Activated naive CD4-positive, alpha-beta T cell treated with anti-CD3 and anti-CD28 coated beads for 36 hours (primary cell): ENCODE measurements at regions of chr1 and their contacts with region 1.

Region 1: DNA sequence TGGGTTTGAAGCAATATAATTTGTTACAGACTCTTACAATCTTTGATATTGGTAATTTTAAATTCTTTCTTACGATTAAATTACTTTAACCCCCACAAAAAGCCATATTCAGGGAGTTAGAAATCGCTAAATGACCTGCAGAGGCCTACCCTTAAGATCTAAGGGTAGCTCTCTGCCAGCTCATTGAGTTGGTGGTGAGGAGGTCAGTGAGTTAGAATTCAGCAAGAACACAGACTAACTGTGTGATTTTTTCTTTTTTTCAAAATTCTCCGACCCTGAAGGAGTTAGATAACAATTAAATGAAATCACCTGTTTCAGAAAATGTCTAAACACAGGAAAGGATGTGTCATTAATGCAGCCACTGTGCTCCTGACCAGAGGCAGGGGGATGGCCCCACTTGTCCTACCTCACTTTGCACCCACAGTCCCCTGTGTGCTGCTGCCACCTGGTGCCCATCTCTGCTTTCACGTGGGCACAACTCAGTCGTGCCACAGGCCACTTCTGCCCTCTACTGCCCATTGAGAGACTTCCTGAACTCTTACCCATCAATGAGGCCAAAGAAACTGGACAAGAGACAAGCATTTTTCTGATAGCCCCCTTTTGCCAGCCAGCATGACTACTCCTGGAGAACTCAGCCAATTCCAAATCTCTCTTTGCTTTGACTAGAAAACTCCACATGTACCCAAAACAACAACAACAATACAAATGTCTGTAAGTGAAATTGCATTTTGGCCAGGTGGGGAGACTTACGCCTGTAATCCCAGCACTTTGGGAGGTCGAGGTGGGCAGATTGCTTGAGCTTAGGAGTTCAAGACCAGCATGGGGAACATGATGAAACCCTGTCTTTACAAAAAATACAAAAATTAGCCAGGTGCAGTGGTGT is 8.4 kb downstream of the CFAP45 start:
- DNase-seq: peak; percentile 87
- H3K4me3 Mint-ChIP-seq: no peak overlapping the region
- H3K27ac Mint-ChIP-seq: no peak overlapping the region
- H3K4me1 Mint-ChIP-seq: peaks cover 6% of the 10 kb centered on the region
- H3K27me3 Mint-ChIP-seq: no peaks in the 10 kb centered on the region

Region 2: DNA sequence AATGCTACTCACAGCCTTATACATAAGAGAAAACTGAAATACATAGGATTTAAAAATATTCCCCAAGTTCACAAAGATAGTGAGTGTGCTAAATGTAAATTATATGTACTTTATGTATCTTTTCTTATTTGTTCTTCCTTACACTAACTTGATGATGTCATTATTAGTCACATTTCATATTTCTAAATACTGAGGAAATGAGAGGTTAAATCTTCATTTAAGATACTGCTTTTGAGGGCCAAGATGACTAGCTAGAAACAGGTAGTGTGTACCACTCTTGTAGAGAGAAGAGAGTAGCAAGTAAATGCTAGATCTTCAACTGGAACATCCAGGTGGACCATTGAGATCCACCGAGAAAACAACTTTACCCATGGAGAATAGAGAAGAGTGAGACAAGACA is 930.3 kb before region 1 on chr1:
- CTCF ChIA-PET with region 1: no interaction called
- intact Hi-C with region 1: no loop called
- DNase-seq: no peak
- H3K4me3 Mint-ChIP-seq: no peak overlapping the region
- H3K27ac Mint-ChIP-seq: no peak overlapping the region
- H3K4me1 Mint-ChIP-seq: peaks cover 6% of the 10 kb centered on the region
- H3K27me3 Mint-ChIP-seq: peaks cover 3% of the 10 kb centered on the region

Region 3: GRCh38 chr1:159132271-159132881 is 759.1 kb before region 1 on chr1:
- CTCF ChIA-PET with region 1: no interaction called
- intact Hi-C with region 1: loop called (anchors 10 kb)
- DNase-seq: peak; percentile 84
- H3K4me3 Mint-ChIP-seq: no peak overlapping the region
- H3K27ac Mint-ChIP-seq: no peak overlapping the region
- H3K4me1 Mint-ChIP-seq: no peaks in the 10 kb centered on the region
- H3K27me3 Mint-ChIP-seq: peaks cover 6% of the 10 kb centered on the region

Region 4: GRCh38 chr1:159214149-159214760 is 677.3 kb before region 1 on chr1:
- CTCF ChIA-PET with region 1: interaction called, 11 read pairs
- intact Hi-C with region 1: loop called (anchors 2 kb)
- DNase-seq: peak; percentile 59
- H3K4me3 Mint-ChIP-seq: no peak overlapping the region
- H3K27ac Mint-ChIP-seq: no peak overlapping the region
- H3K4me1 Mint-ChIP-seq: peaks cover 2% of the 10 kb centered on the region
- H3K27me3 Mint-ChIP-seq: peaks cover 48% of the 10 kb centered on the region

Region 5: DNA sequence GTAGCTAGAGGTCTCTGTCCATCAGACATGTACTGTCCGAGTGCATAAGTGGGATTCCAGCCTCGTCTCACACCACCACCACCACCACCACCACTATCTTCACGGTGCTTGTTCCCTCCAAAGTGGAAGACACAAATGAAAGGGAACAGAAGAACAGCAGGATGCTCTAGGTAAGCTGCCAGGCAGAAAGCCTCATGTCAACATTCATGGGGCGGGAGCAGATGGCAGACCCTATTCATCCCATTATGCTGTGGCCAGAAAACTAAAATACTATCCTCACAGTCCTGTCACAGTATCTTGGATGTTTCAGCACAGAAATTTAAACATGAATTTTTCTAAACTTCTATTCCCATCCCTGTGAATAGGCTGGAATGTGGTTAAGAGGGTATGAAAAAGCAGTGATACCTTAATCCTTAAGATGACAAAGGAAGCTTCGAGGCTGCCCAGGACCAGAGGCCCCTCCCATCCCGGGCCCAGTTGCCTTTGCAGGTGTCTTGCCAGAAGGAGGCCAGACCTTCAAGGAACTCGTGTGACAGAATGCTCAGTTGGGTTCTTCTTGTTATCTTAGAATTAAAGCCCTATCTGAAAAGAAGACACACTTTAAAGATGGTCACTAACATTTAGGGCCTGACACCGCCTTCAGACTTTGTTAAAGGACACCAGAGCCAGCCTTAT is 279.2 kb before region 1 on chr1:
- CTCF ChIA-PET with region 1: no interaction called
- intact Hi-C with region 1: no loop called
- DNase-seq: no peak
- H3K4me3 Mint-ChIP-seq: no peak overlapping the region
- H3K27ac Mint-ChIP-seq: no peak overlapping the region
- H3K4me1 Mint-ChIP-seq: no peaks in the 10 kb centered on the region
- H3K27me3 Mint-ChIP-seq: peaks cover 17% of the 10 kb centered on the region

Region 6: GRCh38 chr1:159737238-159737916 is 154.1 kb before region 1 on chr1:
- CTCF ChIA-PET with region 1: no interaction called
- intact Hi-C with region 1: no loop called
- DNase-seq: no peak
- H3K4me3 Mint-ChIP-seq: no peak overlapping the region
- H3K27ac Mint-ChIP-seq: no peak overlapping the region
- H3K4me1 Mint-ChIP-seq: no peaks in the 10 kb centered on the region
- H3K27me3 Mint-ChIP-seq: peaks cover 14% of the 10 kb centered on the region

Region 7: GRCh38 chr1:159790237-159790917 is 101.1 kb before region 1 on chr1:
- CTCF ChIA-PET with region 1: interaction called, 303 read pairs
- intact Hi-C with region 1: no loop called
- DNase-seq: peak; percentile 14
- H3K4me3 Mint-ChIP-seq: no peak overlapping the region
- H3K27ac Mint-ChIP-seq: no peak overlapping the region
- H3K4me1 Mint-ChIP-seq: no peaks in the 10 kb centered on the region
- H3K27me3 Mint-ChIP-seq: no peaks in the 10 kb centered on the region

Region 8: GRCh38 chr1:159854693-159855192 is 36.8 kb before region 1 on chr1:
- CTCF ChIA-PET with region 1: interaction called, 6 read pairs
- intact Hi-C with region 1: loop called (anchors 2 kb)
- DNase-seq: peak; percentile 73
- H3K4me3 Mint-ChIP-seq: peak overlapping the region; percentile 81
- H3K27ac Mint-ChIP-seq: no peak overlapping the region
- H3K4me1 Mint-ChIP-seq: peaks cover 10% of the 10 kb centered on the region
- H3K27me3 Mint-ChIP-seq: no peaks in the 10 kb centered on the region

Region 9: DNA sequence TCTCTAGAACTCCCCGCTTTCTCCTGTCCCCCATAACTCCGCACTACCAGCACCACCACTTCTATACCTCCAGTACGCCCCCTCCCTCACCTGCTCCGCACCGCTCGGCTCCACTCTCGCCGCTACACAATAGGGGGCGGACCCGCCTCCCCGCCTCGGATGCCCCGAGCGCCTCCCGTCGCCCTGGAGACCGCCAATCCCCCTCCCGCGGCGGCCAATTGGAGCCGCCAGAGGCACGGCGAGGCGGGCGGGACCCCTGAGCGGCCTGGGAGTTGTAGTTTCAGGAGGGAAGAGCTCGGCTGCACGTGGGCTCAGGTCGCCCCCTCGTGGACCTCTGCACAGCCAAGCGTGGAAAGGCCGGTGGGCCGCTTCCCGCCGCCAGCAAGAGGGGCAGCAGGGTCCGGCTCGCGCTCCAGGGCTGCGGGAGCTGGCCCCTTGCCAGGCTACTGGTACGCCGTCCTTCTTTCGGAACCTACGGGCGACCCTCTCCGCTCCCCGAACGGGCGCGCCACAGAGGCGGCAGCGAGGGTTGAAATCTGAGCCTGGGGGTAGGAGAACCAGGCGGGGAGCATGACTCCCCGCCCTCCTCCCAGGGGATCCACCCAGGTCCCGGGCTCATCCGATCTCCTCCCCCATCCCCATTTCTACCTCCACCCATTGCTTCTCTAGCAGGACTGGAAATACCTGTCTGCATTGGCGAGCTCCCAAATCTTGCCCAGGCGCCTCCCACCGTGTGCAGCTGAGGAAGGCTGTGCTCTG is 54.1 kb after region 1 on chr1 and contains the start of gene IGSF9:
- CTCF ChIA-PET with region 1: interaction called, 3 read pairs
- intact Hi-C with region 1: loop called (anchors 2 kb)
- DNase-seq: peak; percentile 63
- H3K4me3 Mint-ChIP-seq: peak within 1 kb of the TSS; percentile 45
- H3K27ac Mint-ChIP-seq: no peak within 1 kb of the TSS
- H3K4me1 Mint-ChIP-seq: peaks cover 6% of the 10 kb centered on the region
- H3K27me3 Mint-ChIP-seq: peaks cover 18% of the 10 kb centered on the region
- total RNA-seq, gene IGSF9: not detected